ENCODE measurements at regions of chr9 and their contacts with region 1.

Region 1: DNA sequence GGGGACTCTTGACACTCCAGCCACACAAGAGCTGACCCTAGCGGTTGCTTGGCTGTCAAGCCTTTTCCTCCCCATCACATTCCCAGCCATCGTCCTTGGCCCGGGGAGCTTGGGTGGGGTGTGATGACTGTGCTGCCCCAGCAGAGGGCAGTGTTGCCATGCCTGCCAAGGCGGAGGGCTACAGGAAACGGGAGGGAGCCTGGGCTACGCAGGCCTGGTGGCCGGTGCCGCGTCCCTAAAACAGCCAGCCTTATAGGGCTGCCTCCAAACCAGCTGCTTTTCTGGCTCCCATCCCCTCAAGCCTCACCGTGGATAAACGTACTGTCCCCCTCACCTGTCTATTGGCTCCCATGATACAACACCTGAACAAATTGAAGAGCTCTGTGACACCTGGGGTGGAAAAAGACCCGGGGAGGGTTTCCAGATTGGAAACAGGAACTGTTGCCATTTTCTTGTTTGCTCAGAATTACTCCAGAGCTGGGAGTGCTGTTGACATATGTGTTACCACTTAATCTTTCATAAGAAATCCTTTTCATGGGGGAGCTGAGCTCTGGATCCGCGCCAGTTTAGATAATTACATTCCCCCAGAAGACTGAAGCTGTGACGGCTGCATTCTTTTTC is 72.8 kb upstream of the ASTN2 start:
- ATAC-seq: peak; percentile 78 to 99 (median 97)
- H3K4me3 ChIP-seq: no peak overlapping the region
- H3K27ac ChIP-seq: no peak overlapping the region
- H3K4me1 ChIP-seq: peaks cover 0 to 6% of the 10 kb centered on the region in 2 donors

Region 2: DNA sequence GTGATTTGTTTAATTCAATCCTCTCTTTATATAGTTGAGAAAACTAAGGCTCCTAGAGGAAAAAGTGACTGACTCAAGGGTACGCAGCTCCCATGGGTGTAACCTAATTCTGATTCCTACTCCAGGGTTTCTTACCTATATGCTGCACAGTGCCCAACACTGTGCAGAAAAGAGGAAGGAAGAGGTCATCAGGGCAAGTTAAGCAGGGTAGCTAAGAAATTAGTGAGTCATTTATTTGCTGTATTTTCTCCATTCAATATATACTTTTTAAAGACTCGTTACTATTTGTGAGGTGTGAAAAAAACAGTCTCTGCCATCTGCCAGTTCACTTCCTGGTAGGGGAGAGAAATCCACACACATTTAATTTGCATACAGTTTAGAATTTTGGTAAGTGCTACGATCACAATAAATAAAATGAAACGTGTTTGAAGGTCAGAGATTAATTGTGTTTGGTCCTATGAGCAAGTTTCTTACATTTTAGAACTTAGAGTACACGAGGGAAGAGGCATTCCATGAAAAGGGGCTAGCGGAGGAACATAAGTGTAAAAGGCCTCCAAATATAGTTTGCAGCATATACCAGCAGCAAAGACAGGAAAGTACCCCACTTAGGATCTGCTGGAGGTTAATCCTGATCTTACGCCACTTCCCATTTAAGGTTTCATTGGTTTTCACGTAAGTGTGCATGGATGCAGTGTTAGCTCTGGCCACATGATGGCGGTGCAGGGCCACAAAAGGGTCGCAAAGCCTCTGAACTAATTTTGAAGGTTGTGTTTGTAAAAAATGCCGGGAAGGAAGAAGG is 156.7 kb after region 1 on chr9:
- in situ Hi-C with region 1: loop called in 1 of 9 experiments (anchors 25 kb)
- ATAC-seq: peak; percentile 59 to 83 (median 70)
- H3K4me3 ChIP-seq: no peak overlapping the region
- H3K27ac ChIP-seq: no peak overlapping the region
- H3K4me1 ChIP-seq: peaks cover 13 to 14% of the 10 kb centered on the region in 2 donors

Region 3: GRCh38 chr9:117772960-117773359 is 285.3 kb after region 1 on chr9:
- in situ Hi-C with region 1: loop called in 1 of 9 experiments (anchors 25 kb)
- ATAC-seq: peak in 5 of 8 experiments; percentile 36 to 100 (median 53)
- H3K4me3 ChIP-seq: no peak overlapping the region
- H3K27ac ChIP-seq: no peak overlapping the region
- H3K4me1 ChIP-seq: peaks cover 0 to 7% of the 10 kb centered on the region in 2 donors

Measured in motor neuron (in vitro differentiated cells).